MCF 10A (cell line): ENCODE measurements at regions of chr12 and their contacts with region 1.

Region 1: DNA sequence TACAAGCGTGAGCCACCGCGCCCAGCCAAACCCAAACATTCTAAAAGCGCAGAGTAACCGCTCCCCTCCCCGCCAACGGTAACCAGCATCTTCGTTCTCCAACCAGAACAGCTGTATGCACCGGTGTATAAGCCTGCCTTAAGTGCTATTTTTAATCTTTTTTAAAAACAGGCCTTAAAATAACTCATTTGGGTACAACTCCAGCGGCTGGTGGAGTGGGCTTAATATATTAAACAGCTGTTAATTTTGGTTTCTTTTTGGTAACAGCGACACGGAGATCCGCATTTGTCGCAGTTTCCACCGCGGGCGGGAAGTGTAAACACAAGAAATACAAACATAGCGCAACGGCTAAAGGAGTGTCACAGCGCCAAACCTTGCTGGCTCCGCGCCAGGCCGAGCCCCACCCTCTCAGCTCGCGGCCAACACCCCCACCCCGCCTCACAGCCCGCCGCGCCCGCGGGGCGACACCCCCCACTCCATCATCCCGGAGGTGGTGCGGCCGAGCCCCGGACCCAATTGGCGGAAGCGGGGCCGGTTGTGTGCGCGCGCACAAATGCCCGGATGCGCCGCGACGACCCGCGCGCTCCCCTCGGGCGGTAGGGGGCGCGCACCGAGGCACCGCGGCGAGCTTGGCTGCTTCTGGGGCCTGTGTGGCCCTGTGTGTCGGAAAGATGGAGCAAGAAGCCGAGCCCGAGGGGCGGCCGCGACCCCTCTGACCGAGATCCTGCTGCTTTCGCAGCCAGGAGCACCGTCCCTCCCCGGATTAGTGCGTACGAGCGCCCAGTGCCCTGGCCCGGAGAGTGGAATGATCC is at the start of gene MDM2:
- DNase-seq: peak; percentile 91
- H3K4me3 Mint-ChIP-seq: peak within 1 kb of the TSS; percentile 90
- H3K27ac Mint-ChIP-seq: peak within 1 kb of the TSS; percentile 94
- H3K4me1 Mint-ChIP-seq: peaks cover 8% of the 10 kb centered on the region
- H3K27me3 Mint-ChIP-seq: no peaks in the 10 kb centered on the region
- CTCF ChIP-seq: peak; percentile 67
- total RNA-seq, gene MDM2: 353 and 383 TPM in 2 replicates

Region 2: DNA sequence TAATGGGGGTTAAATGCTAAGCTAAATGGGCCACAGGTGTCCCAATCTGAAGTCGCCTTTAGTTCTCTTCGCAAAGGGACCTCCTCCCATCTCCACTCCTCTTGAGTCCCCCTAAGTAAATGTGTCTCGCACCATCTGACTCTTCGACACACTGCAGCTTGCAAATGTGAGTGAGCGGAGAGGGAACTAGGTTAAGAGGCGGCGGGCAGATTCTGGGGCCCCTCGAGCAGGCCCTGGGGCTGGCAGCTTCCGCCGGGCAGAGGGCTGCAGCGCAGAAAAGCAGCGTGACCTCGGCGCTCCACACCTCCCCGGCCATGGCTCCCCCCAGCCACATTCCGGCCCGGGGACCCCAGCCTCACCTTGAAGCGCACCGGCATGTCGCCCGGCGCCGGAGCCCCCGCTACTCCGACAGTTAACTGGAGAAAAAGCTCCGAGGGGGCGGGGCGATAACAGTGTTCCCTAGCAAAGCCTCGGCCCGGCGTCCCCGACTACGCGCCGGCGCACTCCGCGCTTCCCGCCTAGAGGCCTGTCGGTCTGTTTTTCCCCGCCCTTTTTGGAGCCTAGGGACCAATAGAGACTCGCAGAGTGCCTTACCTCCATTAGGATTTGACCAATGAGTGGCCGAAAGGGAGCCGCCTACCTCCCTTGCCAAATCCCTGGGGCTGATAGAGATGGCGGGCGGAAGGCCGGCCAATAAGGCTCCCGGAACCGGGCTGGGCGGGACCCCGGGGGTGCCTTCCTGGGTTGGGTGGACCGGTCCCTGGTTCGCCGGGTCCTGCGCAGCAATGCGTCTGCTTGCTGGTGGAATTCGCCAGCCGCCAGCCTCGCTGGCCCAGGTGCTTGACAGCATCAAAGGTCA is 475.7 kb before region 1 on chr12 and contains the start of gene MDM1:
- CTCF ChIA-PET with region 1: no interaction called
- POLR2A ChIA-PET with region 1: interaction called, 7 read pairs
- intact Hi-C with region 1: loop called (anchors 10 kb)
- DNase-seq: peak; percentile 99
- H3K4me3 Mint-ChIP-seq: peak within 1 kb of the TSS; percentile 83
- H3K27ac Mint-ChIP-seq: peak within 1 kb of the TSS; percentile 46
- H3K4me1 Mint-ChIP-seq: peaks cover 40% of the 10 kb centered on the region
- H3K27me3 Mint-ChIP-seq: no peaks in the 10 kb centered on the region
- CTCF ChIP-seq: no peak
- total RNA-seq, gene MDM1: 11.8 and 17.5 TPM in 2 replicates

Region 3: GRCh38 chr12:68420225-68421010 is 387.4 kb before region 1 on chr12:
- CTCF ChIA-PET with region 1: no interaction called
- POLR2A ChIA-PET with region 1: no interaction called
- intact Hi-C with region 1: no loop called
- DNase-seq: no peak
- H3K4me3 Mint-ChIP-seq: no peak overlapping the region
- H3K27ac Mint-ChIP-seq: no peak overlapping the region
- H3K4me1 Mint-ChIP-seq: no peaks in the 10 kb centered on the region
- H3K27me3 Mint-ChIP-seq: no peaks in the 10 kb centered on the region
- CTCF ChIP-seq: no peak

Region 4: DNA sequence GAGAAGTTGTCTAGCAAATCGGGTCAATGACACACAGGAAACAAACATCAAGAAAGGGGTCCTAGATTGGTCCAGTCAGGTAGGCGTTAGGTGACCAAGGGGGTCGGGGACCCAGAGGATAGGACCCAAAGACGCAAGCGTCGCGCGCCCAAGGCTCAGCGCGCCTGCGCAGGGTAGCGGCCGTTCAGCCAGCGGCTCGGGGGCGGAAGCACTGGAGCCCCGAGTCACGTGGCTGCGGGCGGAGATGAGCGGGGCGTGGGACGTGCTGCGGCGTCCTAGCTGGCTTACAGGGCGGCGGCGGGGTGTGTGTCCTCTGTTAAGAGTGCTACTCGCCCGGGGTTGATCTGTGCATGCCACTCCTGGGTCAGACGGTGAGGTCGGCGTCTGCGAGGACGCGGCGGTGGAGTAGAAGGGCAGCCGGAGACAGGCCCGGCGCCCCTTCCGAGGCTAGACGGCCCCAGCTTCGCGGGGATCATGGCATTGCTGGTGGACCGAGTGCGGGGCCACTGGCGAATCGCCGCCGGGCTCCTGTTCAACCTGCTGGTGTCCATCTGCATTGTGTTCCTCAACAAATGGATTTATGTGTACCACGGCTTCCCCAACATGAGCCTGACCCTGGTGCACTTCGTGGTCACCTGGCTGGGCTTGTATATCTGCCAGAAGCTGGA is 61.7 kb before region 1 on chr12 and contains the start of gene SLC35E3:
- CTCF ChIA-PET with region 1: interaction called, 4 read pairs
- POLR2A ChIA-PET with region 1: interaction called, 106 read pairs
- intact Hi-C with region 1: loop called (anchors 1 kb)
- DNase-seq: peak; percentile 94
- H3K4me3 Mint-ChIP-seq: peak within 1 kb of the TSS; percentile 96
- H3K27ac Mint-ChIP-seq: peak within 1 kb of the TSS; percentile 78
- H3K4me1 Mint-ChIP-seq: peaks cover 23% of the 10 kb centered on the region
- H3K27me3 Mint-ChIP-seq: no peaks in the 10 kb centered on the region
- CTCF ChIP-seq: no peak
- total RNA-seq, gene SLC35E3: 7.3 and 7.6 TPM in 2 replicates

Region 5: DNA sequence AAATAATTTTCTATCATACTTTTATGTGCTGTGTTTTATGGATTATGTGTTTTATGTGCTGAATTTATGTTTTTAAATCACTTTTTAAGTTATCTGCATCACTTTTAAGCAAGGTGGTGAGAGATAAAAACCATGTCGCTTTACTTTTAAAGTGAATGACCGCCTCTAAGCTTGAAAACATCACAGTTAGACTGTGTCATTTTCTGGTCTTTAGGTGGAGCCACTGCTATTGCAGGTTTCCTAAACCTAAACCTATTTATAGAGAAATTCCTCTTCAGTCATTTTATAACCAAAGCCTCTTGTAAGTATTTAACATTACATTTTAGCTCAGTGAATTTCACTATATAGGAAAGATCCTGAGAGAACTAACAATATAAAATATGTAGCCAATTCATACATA is 20.9 kb before region 1 on chr12:
- CTCF ChIA-PET with region 1: interaction called, 13 read pairs
- POLR2A ChIA-PET with region 1: interaction called, 185 read pairs
- intact Hi-C with region 1: loop called (anchors 1 kb)
- DNase-seq: no peak
- H3K4me3 Mint-ChIP-seq: peak overlapping the region; percentile 61
- H3K27ac Mint-ChIP-seq: peak overlapping the region; percentile 97
- H3K4me1 Mint-ChIP-seq: peaks cover 30% of the 10 kb centered on the region
- H3K27me3 Mint-ChIP-seq: no peaks in the 10 kb centered on the region
- CTCF ChIP-seq: no peak

Region 6: GRCh38 chr12:68792952-68793835 is 14.6 kb before region 1 on chr12:
- CTCF ChIA-PET with region 1: interaction called, 13 read pairs
- POLR2A ChIA-PET with region 1: interaction called, 185 read pairs
- intact Hi-C with region 1: no loop called
- DNase-seq: peak; percentile 64
- H3K4me3 Mint-ChIP-seq: no peak overlapping the region
- H3K27ac Mint-ChIP-seq: no peak overlapping the region
- H3K4me1 Mint-ChIP-seq: peaks cover 8% of the 10 kb centered on the region
- H3K27me3 Mint-ChIP-seq: no peaks in the 10 kb centered on the region
- CTCF ChIP-seq: no peak

Region 7: DNA sequence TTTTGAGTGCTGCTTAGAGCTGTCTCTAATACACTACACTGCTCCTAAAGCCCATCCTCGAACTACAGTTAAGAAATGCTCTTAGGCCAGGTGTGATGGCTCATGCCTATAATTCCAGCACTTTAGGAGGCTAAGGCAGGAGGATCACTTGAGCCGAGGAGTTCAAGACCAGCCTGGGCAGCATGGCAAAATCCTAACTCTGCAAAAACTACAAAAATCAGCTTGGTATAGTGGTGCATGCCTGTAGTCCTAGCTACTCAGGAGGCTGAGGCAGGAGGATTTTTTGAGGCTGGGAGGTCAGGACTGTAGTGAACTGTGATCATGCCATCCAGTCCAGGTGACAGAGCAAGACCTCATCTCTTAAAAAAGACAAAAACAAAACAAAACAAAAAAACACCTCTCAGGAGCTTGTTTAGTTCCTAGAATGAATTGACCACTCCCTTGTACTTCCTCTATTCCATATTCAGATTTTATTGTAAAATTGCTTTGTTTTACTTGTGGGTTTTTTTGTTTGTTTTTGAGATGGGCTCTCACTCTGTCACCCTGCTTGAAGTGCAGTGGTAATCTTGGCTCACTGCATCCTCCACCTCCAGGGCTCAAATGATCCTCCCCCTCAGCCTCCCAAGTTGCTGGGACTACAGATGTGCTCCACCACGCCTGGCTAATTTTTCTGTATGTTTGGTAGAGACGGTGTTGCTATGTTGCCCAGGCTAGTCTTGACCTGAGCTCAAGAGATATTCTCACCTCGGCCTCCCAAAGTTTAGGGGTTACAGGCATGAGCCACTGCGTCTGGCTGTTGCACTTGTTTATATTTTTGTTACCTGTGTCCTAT is 13.8 kb after region 1 on chr12:
- CTCF ChIA-PET with region 1: interaction called, 7 read pairs
- POLR2A ChIA-PET with region 1: interaction called, 62 read pairs
- intact Hi-C with region 1: no loop called
- DNase-seq: no peak
- H3K4me3 Mint-ChIP-seq: peak overlapping the region; percentile 33
- H3K27ac Mint-ChIP-seq: no peak overlapping the region
- H3K4me1 Mint-ChIP-seq: peaks cover 19% of the 10 kb centered on the region
- H3K27me3 Mint-ChIP-seq: no peaks in the 10 kb centered on the region
- CTCF ChIP-seq: no peak

Region 8: DNA sequence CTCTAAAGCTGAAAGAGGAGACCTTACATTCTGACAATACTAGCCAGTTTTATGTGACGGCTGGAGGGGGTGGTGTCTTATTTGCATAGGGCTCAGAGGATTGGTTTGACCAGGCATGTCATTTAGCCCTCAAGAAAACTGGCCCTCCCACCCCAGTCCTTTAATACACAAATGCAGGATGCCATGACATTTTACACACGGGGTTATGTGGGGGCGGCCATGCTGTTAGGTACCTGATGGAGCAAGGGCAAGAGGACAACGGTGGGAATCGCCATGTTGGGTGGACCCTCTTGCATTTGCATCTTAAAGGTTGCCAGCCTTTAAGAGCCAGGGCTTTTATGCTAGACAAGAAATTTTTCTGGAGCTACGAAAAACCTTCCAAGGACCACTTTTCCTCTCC is 23.5 kb after region 1 on chr12:
- CTCF ChIA-PET with region 1: interaction called, 5 read pairs
- POLR2A ChIA-PET with region 1: interaction called, 26 read pairs
- intact Hi-C with region 1: no loop called
- DNase-seq: no peak
- H3K4me3 Mint-ChIP-seq: no peak overlapping the region
- H3K27ac Mint-ChIP-seq: no peak overlapping the region
- H3K4me1 Mint-ChIP-seq: peaks cover 13% of the 10 kb centered on the region
- H3K27me3 Mint-ChIP-seq: no peaks in the 10 kb centered on the region
- CTCF ChIP-seq: no peak